GM12878 (cell line): ENCODE measurements at regions of chr12 and their contacts with region 1.

Region 1: GRCh38 chr12:26798023-26798422 is 35.0 kb downstream of the ITPR2 start:
- DNase-seq: peak; percentile 53
- ATAC-seq: peak; percentile 82
- H3K4me3 ChIP-seq: peak overlapping the region; percentile 29; the same call in 1 of the 2 replicates
- H3K27ac ChIP-seq: peak overlapping the region; percentile 22; the same call in 1 of the 2 replicates
- H3K4me1 ChIP-seq: peaks cover 24% of the 10 kb centered on the region
- H3K27me3 ChIP-seq: no peaks in the 10 kb centered on the region
- CTCF ChIP-seq: no peak
- EP300 ChIP-seq: no peak
- POLR2A ChIP-seq: no peak
- RAD21 ChIP-seq: no peak

Region 2: GRCh38 chr12:26810330-26810729 is 12.3 kb after region 1 on chr12:
- CTCF ChIA-PET with region 1: interaction called, 7 read pairs
- POLR2A ChIA-PET with region 1: interaction called, 3 read pairs
- RAD21 ChIA-PET with region 1: interaction called, 4 read pairs
- SMC1A ChIA-PET with region 1: interaction called, 12 read pairs
- in situ Hi-C with region 1: no loop called
- intact Hi-C with region 1: no loop called
- DNase-seq: no peak
- ATAC-seq: no peak
- H3K4me3 ChIP-seq: no peak overlapping the region
- H3K27ac ChIP-seq: no peak overlapping the region
- H3K4me1 ChIP-seq: peaks cover 6% of the 10 kb centered on the region; the same call in 1 of the 2 replicates
- H3K27me3 ChIP-seq: no peaks in the 10 kb centered on the region
- CTCF ChIP-seq: no peak
- EP300 ChIP-seq: no peak
- POLR2A ChIP-seq: no peak
- RAD21 ChIP-seq: no peak